AG04449 (cell line): ENCODE measurements at regions of chr2 and their contacts with region 1.

Region 1: GRCh38 chr2:102841107-102841840 is 79.4 kb downstream of the TMEM182 start:
- DNase-seq: no peak
- H3K4me3 ChIP-seq: no peak overlapping the region
- CTCF ChIP-seq: peak; percentile 52

Region 2: GRCh38 chr2:102872388-102872787 is 31.1 kb after region 1 on chr2:
- CTCF ChIA-PET with region 1: interaction called, 11 read pairs
- POLR2A ChIA-PET with region 1: no interaction called
- DNase-seq: no peak
- H3K4me3 ChIP-seq: no peak overlapping the region
- CTCF ChIP-seq: no peak

Region 3: DNA sequence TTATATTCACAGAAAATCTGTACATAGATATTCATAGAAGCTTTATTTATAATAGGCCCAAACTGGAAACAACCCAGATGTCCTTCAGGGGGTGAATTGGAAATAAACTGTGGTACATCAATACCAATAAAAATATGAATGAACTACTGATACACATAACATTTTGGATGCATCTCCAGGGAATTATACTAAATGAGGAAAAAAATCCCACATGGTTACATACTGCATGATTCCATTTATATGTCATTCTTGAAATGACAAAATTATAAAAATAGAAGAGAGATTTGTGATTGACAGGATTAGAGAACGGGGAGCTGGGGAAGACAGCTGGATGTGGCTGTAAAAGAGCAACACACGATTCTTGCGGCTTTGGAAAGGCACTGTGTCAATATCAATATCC is 355.5 kb after region 1 on chr2:
- CTCF ChIA-PET with region 1: no interaction called
- POLR2A ChIA-PET with region 1: no interaction called
- DNase-seq: no peak
- H3K4me3 ChIP-seq: no peak overlapping the region
- CTCF ChIP-seq: no peak